ENCODE measurements at regions of chrX and their contacts with region 1.

Region 1: GRCh38 chrX:54551801-54552200 is 21.8 kb downstream of the GNL3L start:
- DNase-seq: no peak
- H3K4me3 ChIP-seq: no peak overlapping the region
- H3K27ac ChIP-seq: no peak overlapping the region
- H3K4me1 ChIP-seq: no peaks in the 10 kb centered on the region
- H3K27me3 ChIP-seq: no peaks in the 10 kb centered on the region
- CTCF ChIP-seq: no peak
- EP300 ChIP-seq: no peak
- POLR2A ChIP-seq: no peak
- RAD21 ChIP-seq: no peak

Region 2: DNA sequence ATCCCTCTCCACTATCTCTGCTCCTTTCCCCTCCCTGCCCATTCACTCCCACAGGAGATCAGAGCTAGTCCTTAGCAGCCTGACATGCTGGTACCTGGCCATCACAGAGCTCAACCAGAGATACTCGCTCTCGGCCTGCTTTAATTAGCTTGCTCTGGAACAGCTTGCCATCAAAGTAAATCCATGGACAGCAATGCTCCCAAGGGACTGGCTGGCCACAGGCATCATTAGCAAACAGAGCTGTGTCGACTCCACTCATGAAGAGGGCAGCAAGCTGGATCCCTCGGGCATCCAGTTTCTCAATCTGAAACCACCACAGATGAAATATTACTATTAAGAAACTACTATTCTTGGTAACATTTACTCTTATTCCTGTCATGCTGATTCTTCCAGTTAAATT is 464.1 kb before region 1 on chrX:
- CTCF ChIA-PET with region 1: no interaction called
- POLR2A ChIA-PET with region 1: no interaction called
- DNase-seq: no peak
- H3K4me3 ChIP-seq: no peak overlapping the region
- H3K27ac ChIP-seq: no peak overlapping the region
- H3K4me1 ChIP-seq: no peaks in the 10 kb centered on the region
- H3K27me3 ChIP-seq: no peaks in the 10 kb centered on the region
- CTCF ChIP-seq: no peak
- EP300 ChIP-seq: no peak
- POLR2A ChIP-seq: no peak
- RAD21 ChIP-seq: no peak

Region 3: DNA sequence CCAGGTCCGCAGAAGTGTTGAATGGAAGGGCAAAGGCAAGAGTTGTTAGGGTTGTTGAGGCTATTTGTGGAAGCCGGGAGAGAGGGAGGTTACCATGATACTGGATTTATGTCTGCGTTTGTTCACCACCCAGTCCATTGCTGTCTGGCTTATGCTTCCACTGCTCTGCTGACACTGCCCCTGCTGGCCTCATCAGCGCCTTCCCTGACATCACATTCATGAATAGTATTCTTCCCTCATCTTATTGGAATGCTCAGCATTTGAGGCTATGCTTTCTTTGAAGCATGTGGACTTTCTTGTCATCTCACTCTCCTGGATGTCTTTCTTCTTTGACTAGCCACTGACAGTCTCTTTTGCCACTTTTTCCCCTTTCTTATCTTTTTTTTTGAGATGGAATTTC is 11.5 kb before region 1 on chrX:
- CTCF ChIA-PET with region 1: no interaction called
- POLR2A ChIA-PET with region 1: interaction called, 14 read pairs
- DNase-seq: no peak
- H3K4me3 ChIP-seq: no peak overlapping the region
- H3K27ac ChIP-seq: no peak overlapping the region
- H3K4me1 ChIP-seq: no peaks in the 10 kb centered on the region
- H3K27me3 ChIP-seq: no peaks in the 10 kb centered on the region
- CTCF ChIP-seq: peak in 1 of 3 experiments; percentile 23; a peak in 1 of 4 replicates
- EP300 ChIP-seq: no peak
- POLR2A ChIP-seq: no peak
- RAD21 ChIP-seq: no peak

Region 4: GRCh38 chrX:54683655-54684054 is 131.9 kb after region 1 on chrX:
- CTCF ChIA-PET with region 1: no interaction called
- POLR2A ChIA-PET with region 1: no interaction called
- DNase-seq: no peak
- H3K4me3 ChIP-seq: no peak overlapping the region
- H3K27ac ChIP-seq: no peak overlapping the region
- H3K4me1 ChIP-seq: no peaks in the 10 kb centered on the region
- H3K27me3 ChIP-seq: no peaks in the 10 kb centered on the region
- CTCF ChIP-seq: no peak
- EP300 ChIP-seq: no peak
- POLR2A ChIP-seq: no peak
- RAD21 ChIP-seq: no peak

Region 5: DNA sequence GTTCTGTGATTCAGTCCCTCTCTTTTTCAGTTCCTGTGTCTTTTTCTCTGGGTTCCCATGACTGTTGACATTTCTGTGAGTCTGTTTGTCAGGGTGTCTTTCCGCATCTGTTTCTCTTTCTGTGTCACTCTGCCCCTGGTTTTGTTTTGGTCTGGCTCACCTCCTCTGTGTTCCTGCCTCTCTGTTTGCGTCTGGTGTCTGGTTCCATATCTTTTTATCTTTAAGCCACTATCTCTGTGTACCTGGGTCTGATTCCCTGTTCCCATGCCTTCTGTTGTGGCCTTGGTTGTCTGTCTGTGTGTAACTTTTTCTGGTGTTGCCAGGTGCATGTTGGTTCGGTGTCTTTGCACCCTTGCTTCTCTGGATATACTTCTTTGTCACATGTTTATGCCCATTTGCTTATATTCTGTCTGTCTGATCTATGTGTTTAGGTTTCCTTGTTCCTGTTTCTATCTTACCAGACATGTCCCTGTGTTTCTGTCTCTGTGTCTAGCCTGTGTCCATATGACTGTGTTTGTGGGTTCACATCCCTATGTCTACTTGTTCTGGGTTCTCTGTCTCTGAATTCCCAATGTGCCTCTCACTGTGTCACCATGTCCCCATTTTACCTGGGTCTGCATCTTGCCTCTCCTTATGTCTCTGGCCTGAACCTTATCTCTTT is 196.1 kb after region 1 on chrX:
- CTCF ChIA-PET with region 1: no interaction called
- POLR2A ChIA-PET with region 1: no interaction called
- DNase-seq: no peak
- H3K4me3 ChIP-seq: no peak overlapping the region
- H3K27ac ChIP-seq: no peak overlapping the region
- H3K4me1 ChIP-seq: no peaks in the 10 kb centered on the region
- H3K27me3 ChIP-seq: no peaks in the 10 kb centered on the region
- CTCF ChIP-seq: no peak
- EP300 ChIP-seq: no peak
- POLR2A ChIP-seq: no peak
- RAD21 ChIP-seq: no peak

Measured in H1 (cell line).